ENCODE measurements at regions of chr15 and their contacts with region 1.

Region 1: DNA sequence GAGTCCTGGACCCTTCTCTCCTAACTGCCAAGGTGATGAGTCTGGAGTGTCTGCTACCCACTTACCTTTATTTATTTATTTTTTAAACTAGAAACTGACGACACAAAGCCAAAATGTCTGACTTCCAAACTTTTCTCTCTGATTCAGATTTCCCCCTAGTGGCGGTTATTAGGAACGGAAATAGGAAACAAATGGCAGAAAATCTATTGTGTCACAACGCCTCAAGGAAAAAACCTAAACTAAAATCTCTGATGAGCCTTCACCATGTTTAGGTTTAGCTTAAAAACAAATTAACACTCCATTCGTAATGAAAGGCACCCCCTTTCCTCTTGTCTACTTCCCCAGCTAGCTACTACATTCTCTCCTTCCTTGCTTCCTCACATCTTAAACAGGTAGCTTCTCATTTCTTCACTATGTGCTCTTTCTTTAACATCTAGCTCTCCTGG is 94.0 kb upstream of the MEX3B start:
- DNase-seq: no peak
- H3K4me3 Mint-ChIP-seq: no peak overlapping the region
- H3K27ac Mint-ChIP-seq: peak overlapping the region; percentile 1
- H3K4me1 Mint-ChIP-seq: peaks cover 29% of the 10 kb centered on the region
- H3K27me3 Mint-ChIP-seq: no peaks in the 10 kb centered on the region
- CTCF ChIP-seq: peak; percentile 58

Region 2: GRCh38 chr15:81596159-81596865 is 543.5 kb before region 1 on chr15:
- CTCF ChIA-PET with region 1: no interaction called
- intact Hi-C with region 1: no loop called
- DNase-seq: no peak
- H3K4me3 Mint-ChIP-seq: no peak overlapping the region
- H3K27ac Mint-ChIP-seq: no peak overlapping the region
- H3K4me1 Mint-ChIP-seq: no peaks in the 10 kb centered on the region
- H3K27me3 Mint-ChIP-seq: no peaks in the 10 kb centered on the region
- CTCF ChIP-seq: no peak

Region 3: GRCh38 chr15:81809543-81809942 is 330.3 kb before region 1 on chr15:
- CTCF ChIA-PET with region 1: no interaction called
- intact Hi-C with region 1: no loop called
- DNase-seq: peak; percentile 10
- H3K4me3 Mint-ChIP-seq: no peak overlapping the region
- H3K27ac Mint-ChIP-seq: no peak overlapping the region
- H3K4me1 Mint-ChIP-seq: no peaks in the 10 kb centered on the region
- H3K27me3 Mint-ChIP-seq: no peaks in the 10 kb centered on the region
- CTCF ChIP-seq: no peak

Region 4: DNA sequence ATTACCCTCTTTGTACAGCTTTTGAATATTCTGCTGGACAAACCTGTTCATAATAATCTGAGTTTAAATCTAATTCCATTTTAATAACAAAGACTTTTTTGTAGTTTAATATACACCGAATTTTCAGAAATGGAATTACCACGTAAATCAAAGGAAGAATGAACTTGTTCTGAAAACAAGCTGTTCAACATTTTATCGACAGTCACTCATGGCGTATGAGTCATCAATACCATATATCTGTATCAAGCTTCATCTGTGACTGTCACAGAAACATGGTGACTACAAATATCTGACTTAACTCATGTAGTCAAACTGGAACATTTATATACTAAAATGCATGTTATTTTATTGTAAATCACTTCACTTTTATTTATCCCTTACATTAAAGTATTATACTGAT is 32.7 kb after region 1 on chr15:
- CTCF ChIA-PET with region 1: interaction called, 5 read pairs
- intact Hi-C with region 1: loop called (anchors 2 kb)
- DNase-seq: no peak
- H3K4me3 Mint-ChIP-seq: no peak overlapping the region
- H3K27ac Mint-ChIP-seq: no peak overlapping the region
- H3K4me1 Mint-ChIP-seq: no peaks in the 10 kb centered on the region
- H3K27me3 Mint-ChIP-seq: no peaks in the 10 kb centered on the region
- CTCF ChIP-seq: no peak

Measured in Calu3 (cell line).